H1 (cell line): ENCODE measurements at regions of chr10 and their contacts with region 1.

Region 1: DNA sequence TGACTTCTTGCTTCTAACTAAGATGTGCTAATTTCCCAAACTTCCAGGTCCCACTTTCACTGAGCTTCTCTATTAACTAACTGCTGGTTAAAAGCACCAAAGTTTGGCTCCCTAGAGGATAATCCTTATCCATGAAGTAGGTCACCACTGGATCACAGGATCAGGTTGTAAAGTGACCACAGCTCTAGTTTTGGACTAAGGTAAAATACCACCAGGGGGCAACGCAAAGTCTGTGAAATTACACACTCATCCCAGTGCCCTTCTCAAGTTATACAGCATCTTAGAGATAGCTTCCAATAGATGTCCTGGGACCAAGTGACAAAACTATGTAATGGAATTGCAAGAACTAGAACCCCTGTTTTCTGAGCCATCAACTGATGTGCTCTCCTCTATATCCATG is 116.4 kb upstream of the ASAH2 start:
- DNase-seq: no peak
- H3K4me3 ChIP-seq: no peak overlapping the region
- H3K27ac ChIP-seq: no peak overlapping the region
- H3K4me1 ChIP-seq: no peaks in the 10 kb centered on the region
- H3K27me3 ChIP-seq: no peaks in the 10 kb centered on the region
- CTCF ChIP-seq: peak in 2 of 3 experiments; percentile 45 to 50; a peak in 3 of 4 replicates
- EP300 ChIP-seq: no peak
- POLR2A ChIP-seq: no peak
- RAD21 ChIP-seq: peak; percentile 51 to 60

Region 2: GRCh38 chr10:50310560-50311174 is 57.1 kb before region 1 on chr10:
- CTCF ChIA-PET with region 1: no interaction called
- POLR2A ChIA-PET with region 1: no interaction called
- DNase-seq: peak in 1 of 2 experiments; percentile 77
- H3K4me3 ChIP-seq: no peak overlapping the region
- H3K27ac ChIP-seq: no peak overlapping the region
- H3K4me1 ChIP-seq: no peaks in the 10 kb centered on the region
- H3K27me3 ChIP-seq: no peaks in the 10 kb centered on the region
- CTCF ChIP-seq: peak; percentile 52 to 92 (median 74)
- EP300 ChIP-seq: no peak
- POLR2A ChIP-seq: no peak
- RAD21 ChIP-seq: peak; percentile 50 to 73

Region 3: DNA sequence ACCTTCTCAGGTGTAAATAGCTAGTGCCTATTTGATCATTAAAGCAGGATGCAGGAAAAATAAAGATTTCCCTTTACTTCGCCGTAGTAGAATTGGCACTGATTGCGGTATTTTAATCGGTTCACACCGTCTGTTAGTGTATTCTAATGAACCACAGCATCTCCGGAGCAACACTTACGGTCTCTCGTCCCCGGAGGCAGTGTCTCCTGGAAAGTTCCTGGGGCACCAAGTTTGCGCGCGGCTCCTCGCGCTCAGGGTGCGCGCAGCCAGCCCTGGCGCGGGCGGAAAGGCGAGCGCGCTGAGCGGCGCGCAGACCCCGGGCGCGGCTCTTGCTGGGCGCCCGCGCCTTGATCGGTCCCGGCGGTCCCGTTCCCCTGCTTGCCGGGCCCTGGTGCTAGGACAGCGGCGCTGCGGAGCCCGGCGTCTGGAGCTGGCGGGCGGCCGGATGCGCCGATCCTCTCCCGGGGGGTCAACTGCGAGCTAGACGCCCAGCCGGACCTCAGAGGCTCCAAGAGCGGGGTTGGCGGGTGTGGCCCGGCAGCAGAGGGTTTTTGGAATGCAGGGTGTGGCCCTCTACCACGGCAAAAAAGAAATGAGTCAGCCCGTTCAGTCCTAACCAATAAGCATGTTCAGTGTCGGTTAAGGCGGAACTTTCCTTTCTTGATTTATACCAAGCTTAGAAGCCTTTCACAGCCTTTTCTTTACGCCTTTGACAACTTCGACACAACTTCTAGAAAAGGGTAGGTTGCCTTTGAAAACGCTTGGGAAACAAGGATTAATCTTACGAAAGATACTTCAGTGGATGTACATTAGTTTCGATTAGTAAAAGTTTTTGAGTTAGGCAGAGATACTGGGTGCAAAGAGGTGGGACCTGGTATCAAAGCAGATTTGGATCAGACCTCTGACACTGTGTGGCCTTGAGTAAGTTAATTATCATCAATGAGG is 50.4 kb after region 1 on chr10:
- CTCF ChIA-PET with region 1: interaction called, 14 read pairs
- POLR2A ChIA-PET with region 1: no interaction called
- DNase-seq: peak; percentile 29 to 76
- H3K4me3 ChIP-seq: peak overlapping the region; percentile 40 to 63 (median 48)
- H3K27ac ChIP-seq: no peak overlapping the region
- H3K4me1 ChIP-seq: peaks cover 0 to 9% (median 5%) of the 10 kb centered on the region in 4 experiments; a peak in 6 of 7 replicates
- H3K27me3 ChIP-seq: no peaks in the 10 kb centered on the region
- CTCF ChIP-seq: no peak
- EP300 ChIP-seq: no peak
- POLR2A ChIP-seq: 0 out of 3 replicates have a peak, but pooled peaks of 1 of the 2 experiments have one; percentile 26
- RAD21 ChIP-seq: peak in 1 of 2 experiments; percentile 6; a peak in 2 of 4 replicates

Region 4: DNA sequence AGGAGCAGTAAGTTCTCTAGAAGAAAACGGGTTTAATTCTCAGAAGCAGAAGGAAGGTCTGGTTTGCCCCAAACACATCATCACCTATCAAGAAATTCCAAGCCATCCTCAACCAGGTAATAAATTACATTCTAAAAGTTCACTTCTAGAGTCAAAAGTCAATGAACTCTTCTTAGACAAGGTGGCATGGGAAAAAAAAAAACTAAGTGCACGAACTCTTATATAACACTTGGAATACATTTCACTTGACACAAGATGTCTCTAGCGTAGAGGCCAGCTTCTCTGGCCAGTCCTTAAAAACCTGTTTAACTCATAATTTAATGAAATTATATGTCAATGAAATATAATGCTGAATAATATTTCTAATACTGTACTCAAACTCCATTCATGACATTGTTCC is 55.7 kb after region 1 on chr10:
- CTCF ChIA-PET with region 1: interaction called, 14 read pairs
- POLR2A ChIA-PET with region 1: no interaction called
- DNase-seq: no peak
- H3K4me3 ChIP-seq: no peak overlapping the region
- H3K27ac ChIP-seq: no peak overlapping the region
- H3K4me1 ChIP-seq: peaks cover 0 to 5% (median 1%) of the 10 kb centered on the region in 4 experiments; a peak in 5 of 7 replicates
- H3K27me3 ChIP-seq: no peaks in the 10 kb centered on the region
- CTCF ChIP-seq: no peak
- EP300 ChIP-seq: no peak
- POLR2A ChIP-seq: no peak
- RAD21 ChIP-seq: no peak